Calu3 (cell line): ENCODE measurements at regions of chr3 and their contacts with region 1.

Region 1: GRCh38 chr3:169744366-169745054 is 20.4 kb downstream of the TERC start:
- DNase-seq: no peak
- H3K4me3 Mint-ChIP-seq: no peak overlapping the region
- H3K27ac Mint-ChIP-seq: no peak overlapping the region
- H3K4me1 Mint-ChIP-seq: peaks cover 12% of the 10 kb centered on the region
- H3K27me3 Mint-ChIP-seq: peaks cover 14% of the 10 kb centered on the region
- CTCF ChIP-seq: peak; percentile 42

Region 2: GRCh38 chr3:168213920-168214319 is 1530.6 kb before region 1 on chr3:
- CTCF ChIA-PET with region 1: no interaction called
- intact Hi-C with region 1: loop called (anchors 5 kb)
- DNase-seq: no peak
- H3K4me3 Mint-ChIP-seq: no peak overlapping the region
- H3K27ac Mint-ChIP-seq: no peak overlapping the region
- H3K4me1 Mint-ChIP-seq: no peaks in the 10 kb centered on the region
- H3K27me3 Mint-ChIP-seq: no peaks in the 10 kb centered on the region
- CTCF ChIP-seq: no peak

Region 3: DNA sequence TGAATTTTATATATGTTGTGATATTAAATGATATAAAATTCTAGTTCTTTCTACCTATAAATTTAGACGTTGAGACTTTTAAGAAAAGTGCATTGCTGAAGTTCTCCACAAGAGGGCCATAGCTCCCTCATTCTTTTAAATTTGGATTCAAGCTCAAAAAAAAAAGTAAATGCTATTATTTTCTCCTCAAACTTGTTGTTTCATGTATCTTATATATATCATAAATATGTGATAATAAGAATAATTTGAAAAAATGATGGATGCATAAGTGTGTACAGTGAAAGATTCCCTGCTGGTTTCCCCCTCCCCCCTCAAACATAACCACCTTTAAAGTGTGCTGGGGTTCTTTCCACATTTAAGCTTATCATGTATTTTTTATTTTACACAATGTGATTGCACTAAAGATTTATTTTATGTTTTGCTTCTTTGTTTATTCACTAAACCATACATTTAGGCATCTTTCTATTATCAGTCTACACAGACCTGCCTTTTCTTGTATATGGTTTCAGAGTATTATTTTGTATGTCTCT is 879.4 kb before region 1 on chr3:
- CTCF ChIA-PET with region 1: interaction called, 4 read pairs
- intact Hi-C with region 1: loop called (anchors 2 kb)
- DNase-seq: peak; percentile 34
- H3K4me3 Mint-ChIP-seq: peak overlapping the region; percentile 49
- H3K27ac Mint-ChIP-seq: no peak overlapping the region
- H3K4me1 Mint-ChIP-seq: peaks cover 90% of the 10 kb centered on the region
- H3K27me3 Mint-ChIP-seq: no peaks in the 10 kb centered on the region
- CTCF ChIP-seq: peak; percentile 89

Region 4: GRCh38 chr3:169133178-169134161 is 611.0 kb before region 1 on chr3:
- CTCF ChIA-PET with region 1: no interaction called
- intact Hi-C with region 1: loop called (anchors 10 kb)
- DNase-seq: no peak
- H3K4me3 Mint-ChIP-seq: peak overlapping the region; percentile 33
- H3K27ac Mint-ChIP-seq: peak overlapping the region; percentile 75
- H3K4me1 Mint-ChIP-seq: peaks cover 75% of the 10 kb centered on the region
- H3K27me3 Mint-ChIP-seq: no peaks in the 10 kb centered on the region
- CTCF ChIP-seq: peak; percentile 63

Region 5: GRCh38 chr3:169278092-169278491 is 466.4 kb before region 1 on chr3:
- CTCF ChIA-PET with region 1: no interaction called
- intact Hi-C with region 1: loop called (anchors 10 kb)
- DNase-seq: no peak
- H3K4me3 Mint-ChIP-seq: no peak overlapping the region
- H3K27ac Mint-ChIP-seq: no peak overlapping the region
- H3K4me1 Mint-ChIP-seq: peaks cover 57% of the 10 kb centered on the region
- H3K27me3 Mint-ChIP-seq: no peaks in the 10 kb centered on the region
- CTCF ChIP-seq: no peak

Region 6: DNA sequence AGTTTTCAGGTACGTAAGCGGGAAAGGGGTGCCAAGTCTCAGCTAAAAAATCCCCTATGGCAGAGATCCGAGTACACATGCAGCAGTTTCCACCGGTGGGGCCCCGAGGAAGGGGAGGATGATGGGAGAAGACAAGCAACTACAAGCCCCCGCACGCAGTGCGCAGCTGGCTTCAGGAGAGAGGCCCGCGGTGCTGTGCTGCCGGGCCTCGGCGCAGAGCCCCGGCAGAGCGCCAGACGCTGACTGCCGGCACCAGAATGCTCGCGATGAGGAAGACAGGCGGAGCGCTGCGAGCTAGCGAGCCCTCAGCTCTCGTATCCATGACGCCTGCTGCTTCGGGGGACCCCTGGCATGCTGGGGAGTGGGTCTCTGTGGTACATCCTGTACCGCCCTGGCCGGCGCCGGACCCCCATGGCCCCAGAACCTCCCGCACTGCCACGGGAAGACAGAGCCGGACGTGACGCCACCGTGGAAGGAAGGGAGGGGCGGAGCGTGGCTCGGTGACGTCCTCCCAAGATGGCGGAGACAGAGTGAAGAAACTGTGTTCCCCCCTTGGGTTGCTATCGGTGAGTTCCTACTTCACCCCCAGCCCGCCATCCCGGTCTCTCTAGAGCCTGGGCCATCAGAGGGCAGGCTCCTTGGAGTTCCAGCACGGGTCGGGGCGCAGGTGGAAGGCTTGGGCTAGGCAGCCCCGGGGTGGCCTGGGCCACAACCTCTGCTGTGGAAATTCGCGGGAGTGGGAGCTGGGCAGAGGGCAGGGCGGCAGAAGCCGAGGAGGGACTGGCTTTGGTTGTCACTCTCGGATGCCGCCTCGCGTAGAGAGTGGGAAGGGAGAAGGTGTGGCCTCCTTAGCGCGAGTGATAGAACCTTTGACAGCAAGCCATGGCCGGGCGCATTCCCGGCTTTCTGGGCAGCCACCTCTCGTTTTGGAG is 28.7 kb after region 1 on chr3 and contains the start of gene MYNN:
- CTCF ChIA-PET with region 1: no interaction called
- intact Hi-C with region 1: no loop called
- DNase-seq: peak; percentile 97
- H3K4me3 Mint-ChIP-seq: peak within 1 kb of the TSS; percentile 96
- H3K27ac Mint-ChIP-seq: peak within 1 kb of the TSS; percentile 97
- H3K4me1 Mint-ChIP-seq: peaks cover 17% of the 10 kb centered on the region
- H3K27me3 Mint-ChIP-seq: no peaks in the 10 kb centered on the region
- CTCF ChIP-seq: no peak
- total RNA-seq, gene MYNN: 19.9 and 22.9 TPM in 2 replicates

Region 7: DNA sequence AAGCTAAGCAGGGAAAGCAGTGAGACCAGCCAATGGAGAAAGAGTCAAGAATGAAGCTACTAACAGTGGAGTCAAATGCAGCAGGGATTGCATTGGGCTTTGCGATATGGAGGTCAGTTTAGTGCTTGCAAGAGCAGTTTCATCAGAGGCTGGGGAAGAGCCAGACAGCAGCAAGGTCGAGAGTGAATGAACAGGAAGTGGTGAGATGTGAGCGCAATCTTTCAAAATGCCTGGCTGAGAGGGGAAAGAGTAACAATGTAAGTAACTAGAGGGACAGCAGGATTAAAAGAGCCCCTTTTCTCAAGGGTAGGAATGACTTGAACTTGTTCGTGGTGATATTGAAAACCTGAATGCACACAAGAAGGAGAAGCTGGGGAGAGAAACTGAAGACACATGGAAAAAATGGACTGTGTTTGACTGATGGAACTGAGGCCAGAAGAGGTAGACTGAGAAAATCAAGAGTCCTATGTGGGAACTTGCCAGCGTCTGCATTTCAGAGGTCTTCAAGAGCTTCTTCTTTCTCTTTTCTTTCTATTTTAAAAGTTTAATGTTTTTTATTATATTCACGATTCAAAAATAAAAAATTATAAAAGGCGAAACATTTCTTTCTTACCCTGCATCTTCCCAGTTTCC is 262.6 kb after region 1 on chr3:
- CTCF ChIA-PET with region 1: no interaction called
- intact Hi-C with region 1: no loop called
- DNase-seq: no peak
- H3K4me3 Mint-ChIP-seq: no peak overlapping the region
- H3K27ac Mint-ChIP-seq: no peak overlapping the region
- H3K4me1 Mint-ChIP-seq: peaks cover 9% of the 10 kb centered on the region
- H3K27me3 Mint-ChIP-seq: no peaks in the 10 kb centered on the region
- CTCF ChIP-seq: no peak